Psoas muscle (tissue), 8 donors: ENCODE measurements at regions of chr14 and their contacts with region 1.

Region 1: GRCh38 chr14:73526569-73526968 is 10.4 kb upstream of the ACOT1 start:
- DNase-seq: peak in 1 of 2 donors; percentile 19
- ATAC-seq: peak; percentile 67 to 88 (median 73)
- H3K4me3 ChIP-seq: no peak overlapping the region
- H3K27ac ChIP-seq: peak overlapping the region; percentile 46
- H3K4me1 ChIP-seq: peaks cover 15% of the 10 kb centered on the region
- H3K27me3 ChIP-seq: no peaks in the 10 kb centered on the region
- CTCF ChIP-seq: no peak

Region 2: GRCh38 chr14:73568381-73568781 is 41.8 kb after region 1 on chr14:
- intact Hi-C with region 1: loop called (anchors 5 to 10 kb)
- DNase-seq: no peak
- ATAC-seq: peak in 1 of 4 donors; percentile 32
- H3K4me3 ChIP-seq: peak overlapping the region; percentile 77
- H3K27ac ChIP-seq: peak overlapping the region; percentile 92
- H3K4me1 ChIP-seq: peaks cover 23% of the 10 kb centered on the region
- H3K27me3 ChIP-seq: no peaks in the 10 kb centered on the region
- CTCF ChIP-seq: no peak

Region 3: DNA sequence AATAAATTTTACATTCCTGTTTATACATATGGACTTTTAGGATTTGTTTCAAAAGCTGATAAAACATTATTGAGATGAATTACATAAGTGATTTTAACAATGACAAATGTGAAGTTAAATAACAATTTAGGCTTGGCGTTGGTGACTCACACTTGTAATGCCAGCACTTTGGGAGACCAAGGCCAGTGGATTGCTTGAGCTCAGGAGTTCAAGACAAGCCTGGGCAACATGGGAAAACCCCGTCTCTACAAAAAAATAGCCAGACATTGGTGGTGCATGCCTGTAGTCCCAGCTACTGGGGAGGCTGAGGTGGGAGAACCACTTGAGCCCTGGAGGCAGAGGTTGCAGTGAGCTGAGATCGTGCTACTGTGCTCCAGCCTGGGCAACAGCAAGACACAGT is 49.8 kb after region 1 on chr14:
- intact Hi-C with region 1: loop called in 1 of 2 experiments (anchors 10 kb)
- DNase-seq: no peak
- ATAC-seq: no peak
- H3K4me3 ChIP-seq: no peak overlapping the region
- H3K27ac ChIP-seq: peak overlapping the region; percentile 23
- H3K4me1 ChIP-seq: peaks cover 11% of the 10 kb centered on the region
- H3K27me3 ChIP-seq: no peaks in the 10 kb centered on the region
- CTCF ChIP-seq: no peak